ENCODE measurements at regions of chr10 and their contacts with region 1.

Region 1: GRCh38 chr10:42866115-42866995 is 83.8 kb downstream of the BMS1 start:
- H3K4me3 Mint-ChIP-seq: peak overlapping the region; percentile 56
- H3K27ac Mint-ChIP-seq: no peak overlapping the region
- H3K4me1 Mint-ChIP-seq: peaks cover 26% of the 10 kb centered on the region
- H3K27me3 Mint-ChIP-seq: peaks cover 27% of the 10 kb centered on the region

Region 2: DNA sequence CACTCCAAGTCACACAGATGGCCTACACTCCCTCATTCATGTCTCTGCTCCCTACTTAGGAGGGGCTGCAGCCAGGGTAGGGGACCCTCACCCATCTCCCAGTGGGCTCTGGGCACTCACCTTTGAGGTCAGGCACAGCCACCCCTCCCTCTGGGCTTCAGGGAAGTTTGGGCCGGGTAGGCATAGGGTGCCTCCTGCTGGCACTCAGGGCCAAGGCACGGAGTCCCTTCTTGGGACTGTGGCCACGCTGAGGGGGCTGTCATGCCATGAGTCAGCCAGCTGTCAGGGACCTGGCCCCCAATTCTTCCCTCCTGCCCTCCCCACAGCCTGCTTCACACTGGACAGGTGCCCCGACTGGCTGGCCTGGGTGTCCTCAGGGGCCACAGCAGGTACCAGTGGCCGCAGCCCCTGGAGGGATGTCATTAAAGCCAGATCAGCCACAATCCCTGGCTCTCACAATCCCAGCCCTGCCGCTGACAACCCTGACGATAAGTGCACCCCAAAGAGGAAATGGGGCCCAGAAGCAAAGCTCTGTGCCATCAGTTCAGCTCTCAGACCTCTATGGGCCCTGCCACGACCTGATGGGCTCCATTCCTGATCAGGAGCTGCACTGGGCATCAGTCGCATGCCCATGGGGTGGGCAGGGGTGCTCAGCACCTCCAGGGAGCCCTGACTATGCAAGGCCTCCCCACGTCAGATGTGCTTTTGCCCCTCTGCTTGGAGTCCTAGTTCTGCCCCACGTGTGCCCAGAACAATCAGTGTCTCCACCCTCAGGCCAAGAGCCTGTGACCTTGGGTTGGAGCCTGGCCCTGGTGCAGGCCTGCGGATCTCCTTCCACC is 176.4 kb after region 1 on chr10:
- intact Hi-C with region 1: loop called (anchors 2 kb)
- H3K4me3 Mint-ChIP-seq: no peak overlapping the region
- H3K27ac Mint-ChIP-seq: no peak overlapping the region
- H3K4me1 Mint-ChIP-seq: no peaks in the 10 kb centered on the region
- H3K27me3 Mint-ChIP-seq: no peaks in the 10 kb centered on the region

Region 3: GRCh38 chr10:43078987-43079275 is 212.6 kb after region 1 on chr10:
- intact Hi-C with region 1: loop called (anchors 1 kb)
- H3K4me3 Mint-ChIP-seq: no peak overlapping the region
- H3K27ac Mint-ChIP-seq: no peak overlapping the region
- H3K4me1 Mint-ChIP-seq: peaks cover 42% of the 10 kb centered on the region
- H3K27me3 Mint-ChIP-seq: peaks cover 68% of the 10 kb centered on the region

Region 4: DNA sequence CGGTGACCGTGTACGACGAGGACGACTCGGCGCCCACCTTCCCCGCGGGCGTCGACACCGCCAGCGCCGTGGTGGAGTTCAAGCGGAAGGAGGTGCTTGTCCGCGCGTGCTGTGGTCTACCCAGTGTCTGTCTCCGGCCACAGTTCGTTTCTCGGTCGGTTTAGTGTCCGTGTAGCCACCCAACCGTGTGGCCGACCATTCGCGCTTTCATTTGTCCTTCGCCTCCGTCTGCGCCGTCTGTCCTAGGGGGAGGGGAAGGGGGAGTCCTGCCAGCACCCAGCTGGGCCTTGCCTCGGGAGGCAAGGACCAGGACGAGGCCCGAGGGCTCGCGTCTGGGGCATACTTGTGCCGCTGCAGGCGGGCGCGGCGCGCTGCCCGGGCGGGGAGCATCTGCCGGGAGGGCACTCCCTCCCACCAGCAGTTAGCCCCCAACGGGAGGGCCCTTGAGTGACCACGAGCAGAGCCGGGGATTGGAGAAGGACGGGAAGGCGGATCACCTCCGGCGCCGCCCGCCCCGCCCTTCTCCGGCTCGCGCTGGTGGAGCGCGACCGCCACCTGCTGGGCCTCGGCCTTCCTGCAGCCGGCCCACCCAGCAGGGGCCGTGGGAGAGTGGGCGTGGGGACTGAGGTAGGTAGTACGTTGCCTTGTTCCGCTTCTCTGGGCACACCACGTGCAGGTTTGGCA is 238.9 kb after region 1 on chr10:
- intact Hi-C with region 1: loop called (anchors 1 kb)
- H3K4me3 Mint-ChIP-seq: peak overlapping the region; percentile 75
- H3K27ac Mint-ChIP-seq: peak overlapping the region; percentile 75
- H3K4me1 Mint-ChIP-seq: peaks cover 46% of the 10 kb centered on the region
- H3K27me3 Mint-ChIP-seq: peaks cover 35% of the 10 kb centered on the region

Region 5: GRCh38 chr10:43204943-43205671 is 338.8 kb after region 1 on chr10:
- intact Hi-C with region 1: loop called (anchors 5 kb)
- H3K4me3 Mint-ChIP-seq: no peak overlapping the region
- H3K27ac Mint-ChIP-seq: no peak overlapping the region
- H3K4me1 Mint-ChIP-seq: peaks cover 27% of the 10 kb centered on the region
- H3K27me3 Mint-ChIP-seq: no peaks in the 10 kb centered on the region

Region 6: DNA sequence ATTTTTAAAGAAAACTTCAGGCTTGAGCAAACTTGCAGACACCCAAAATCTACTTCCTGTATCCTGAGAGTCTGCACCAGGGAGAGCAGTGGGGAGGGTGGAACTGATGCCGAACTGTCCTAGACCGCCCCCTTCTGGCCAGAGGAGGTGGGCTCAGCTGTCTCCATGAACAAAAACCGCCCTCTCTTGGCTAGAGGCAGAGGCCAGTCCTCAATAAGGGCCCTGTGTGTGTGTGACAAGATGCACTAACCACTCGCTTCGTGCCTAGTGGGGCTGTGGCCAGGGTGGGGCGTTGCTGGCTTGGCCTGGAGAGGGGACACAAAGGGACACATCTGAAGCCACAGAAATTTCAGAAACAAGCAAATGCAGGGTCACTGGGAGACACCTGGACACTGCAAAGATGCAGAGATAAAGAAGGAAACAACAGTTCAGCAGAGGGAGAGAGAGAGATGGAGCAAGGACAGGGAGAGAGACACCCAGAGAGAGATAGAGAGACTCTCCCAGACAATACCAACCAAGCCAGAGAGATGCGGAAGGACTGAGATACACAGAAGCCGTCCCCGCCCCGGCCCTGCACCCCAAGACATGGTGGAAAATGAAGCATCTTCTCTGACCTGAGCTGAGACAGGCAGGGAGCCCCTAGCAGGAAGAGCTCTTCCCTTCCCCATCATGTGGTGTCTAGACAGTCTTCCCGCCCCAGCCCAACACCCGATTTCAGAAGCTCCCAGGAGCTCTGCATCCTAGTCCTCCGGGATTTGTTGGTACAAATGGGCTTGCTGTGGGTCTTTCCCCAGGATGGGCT is 482.4 kb after region 1 on chr10:
- intact Hi-C with region 1: loop called (anchors 5 kb)
- H3K4me3 Mint-ChIP-seq: no peak overlapping the region
- H3K27ac Mint-ChIP-seq: no peak overlapping the region
- H3K4me1 Mint-ChIP-seq: peaks cover 16% of the 10 kb centered on the region
- H3K27me3 Mint-ChIP-seq: peaks cover 38% of the 10 kb centered on the region

Region 7: DNA sequence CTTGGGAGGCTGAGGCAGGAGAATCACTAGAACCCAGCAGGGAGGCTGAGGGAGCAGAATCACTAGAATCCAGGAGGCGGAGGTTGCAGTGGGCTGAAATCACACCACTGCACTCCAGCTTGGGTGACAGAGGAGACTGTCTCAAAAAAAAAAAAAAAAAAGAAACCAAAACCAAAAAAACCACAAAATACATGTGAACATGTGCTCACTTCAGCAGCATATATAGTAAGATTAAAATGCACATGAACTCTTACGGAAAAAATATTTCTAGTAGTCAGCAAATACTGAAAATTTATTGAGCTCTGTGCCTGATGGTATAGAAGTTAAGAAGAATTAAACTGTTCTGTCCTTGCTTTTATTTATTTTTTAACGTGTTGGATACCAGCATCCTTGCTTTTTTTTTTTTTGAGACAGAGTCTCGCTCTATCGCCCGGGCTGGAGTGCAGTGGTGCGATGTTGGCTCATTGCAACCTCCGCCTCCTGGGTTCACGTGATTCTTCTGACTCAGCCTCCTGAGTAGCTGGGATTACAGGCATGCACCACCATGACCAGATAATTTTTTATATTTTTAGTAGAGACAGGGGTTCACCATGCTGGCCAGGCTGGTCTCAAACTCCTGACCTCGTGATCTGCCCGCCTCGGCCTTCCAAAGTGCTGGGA is 560.9 kb after region 1 on chr10:
- intact Hi-C with region 1: no loop called
- H3K4me3 Mint-ChIP-seq: no peak overlapping the region
- H3K27ac Mint-ChIP-seq: no peak overlapping the region
- H3K4me1 Mint-ChIP-seq: peaks cover 8% of the 10 kb centered on the region
- H3K27me3 Mint-ChIP-seq: no peaks in the 10 kb centered on the region

Region 8: DNA sequence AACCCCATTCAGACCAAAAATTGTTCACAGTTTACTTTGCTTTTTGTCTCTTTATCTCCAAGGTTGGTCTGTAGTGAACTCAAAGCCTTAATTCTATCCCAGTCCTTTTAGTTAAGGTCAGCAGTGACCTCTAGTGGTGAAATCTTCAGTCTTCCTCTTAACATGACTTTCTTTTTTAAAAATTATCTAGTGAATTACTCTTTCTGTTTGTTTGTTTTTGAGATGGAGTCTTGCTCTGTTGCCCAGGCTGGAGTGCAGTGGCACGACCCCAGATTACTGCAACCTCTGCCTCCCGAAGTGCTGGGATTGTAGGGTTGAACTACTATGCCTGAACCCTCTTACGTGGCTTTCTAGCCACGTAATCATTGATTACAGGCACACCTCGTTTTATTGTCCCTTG is 595.6 kb after region 1 on chr10:
- intact Hi-C with region 1: loop called (anchors 5 kb)
- H3K4me3 Mint-ChIP-seq: peak overlapping the region; percentile 37
- H3K27ac Mint-ChIP-seq: no peak overlapping the region
- H3K4me1 Mint-ChIP-seq: peaks cover 4% of the 10 kb centered on the region
- H3K27me3 Mint-ChIP-seq: no peaks in the 10 kb centered on the region